ENCODE measurements at regions of chr7 and their contacts with region 1.

Region 1: DNA sequence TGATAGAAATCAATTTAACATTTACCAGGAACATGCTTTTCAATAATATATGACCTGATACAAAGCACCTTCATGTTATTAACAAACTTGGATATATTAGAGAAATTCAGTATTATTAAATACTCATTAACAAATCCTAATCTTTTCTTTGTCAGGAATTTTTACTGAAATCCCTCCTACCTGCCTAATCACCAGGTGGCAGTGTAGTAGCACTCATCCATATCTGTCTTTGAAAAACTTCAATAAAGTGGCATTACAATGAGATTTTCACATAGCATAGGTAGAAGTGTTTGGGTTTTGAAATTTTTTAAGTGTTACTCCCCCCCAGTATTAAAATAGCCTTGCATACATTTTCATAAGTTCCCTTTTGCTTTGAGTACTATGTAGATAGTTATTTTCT is 1246.6 kb upstream of the LRRN3 start:
- DNase-seq: peak; percentile 42
- ATAC-seq: peak; percentile 55; the same call in 1 of the 2 replicates
- H3K4me3 ChIP-seq: no peak overlapping the region
- H3K27ac ChIP-seq: no peak overlapping the region
- H3K4me1 ChIP-seq: no peaks in the 10 kb centered on the region
- H3K27me3 ChIP-seq: no peaks in the 10 kb centered on the region
- CTCF ChIP-seq: peak; percentile 74

Region 2: DNA sequence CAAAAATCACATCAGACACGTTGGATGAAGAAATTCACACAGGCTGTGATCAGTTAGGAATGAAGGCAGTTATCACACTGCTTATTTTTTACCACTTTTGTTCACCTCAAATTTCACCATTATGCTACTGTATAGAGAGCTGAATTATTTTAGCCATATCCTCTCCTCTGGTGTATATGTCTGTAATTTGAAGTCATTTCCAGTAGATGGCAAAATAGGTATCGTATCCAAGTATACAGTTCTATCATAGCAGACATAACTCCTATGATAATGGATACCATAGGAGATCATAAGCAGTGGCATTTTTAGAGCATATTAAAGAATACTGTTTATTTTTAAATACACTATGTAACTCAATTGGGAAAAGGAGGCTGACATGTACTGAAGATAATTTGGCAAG is 365.0 kb before region 1 on chr7:
- CTCF ChIA-PET with region 1: no interaction called
- POLR2A ChIA-PET with region 1: no interaction called
- intact Hi-C with region 1: loop called (anchors 2 kb)
- DNase-seq: peak; percentile 11
- ATAC-seq: peak; percentile 86
- H3K4me3 ChIP-seq: no peak overlapping the region
- H3K27ac ChIP-seq: no peak overlapping the region
- H3K4me1 ChIP-seq: no peaks in the 10 kb centered on the region
- H3K27me3 ChIP-seq: no peaks in the 10 kb centered on the region
- CTCF ChIP-seq: peak; percentile 29; the same call in 1 of the 2 replicates

Region 3: DNA sequence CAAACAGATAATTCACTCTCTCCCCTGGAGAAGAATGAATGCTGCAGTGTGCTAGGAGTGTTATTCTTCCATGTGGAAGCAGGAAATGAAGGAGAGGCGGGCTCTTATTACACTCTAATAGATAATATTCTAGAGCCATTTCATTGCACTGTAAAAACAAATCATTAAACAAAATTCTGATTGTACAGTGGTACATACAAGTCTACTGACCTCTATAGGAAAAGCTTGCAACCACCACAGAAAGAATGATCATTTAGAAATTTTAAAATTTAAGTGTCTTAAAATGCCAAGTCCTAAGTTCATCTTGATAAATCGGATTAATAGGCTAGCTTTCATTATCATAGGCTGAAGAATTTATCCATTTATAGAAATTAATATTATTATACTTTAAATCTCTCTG is 286.3 kb after region 1 on chr7:
- CTCF ChIA-PET with region 1: no interaction called
- POLR2A ChIA-PET with region 1: no interaction called
- intact Hi-C with region 1: loop called (anchors 1 kb)
- DNase-seq: peak; percentile 20
- ATAC-seq: peak; percentile 64
- H3K4me3 ChIP-seq: no peak overlapping the region
- H3K27ac ChIP-seq: no peak overlapping the region
- H3K4me1 ChIP-seq: no peaks in the 10 kb centered on the region
- H3K27me3 ChIP-seq: no peaks in the 10 kb centered on the region
- CTCF ChIP-seq: peak; percentile 47

Region 4: DNA sequence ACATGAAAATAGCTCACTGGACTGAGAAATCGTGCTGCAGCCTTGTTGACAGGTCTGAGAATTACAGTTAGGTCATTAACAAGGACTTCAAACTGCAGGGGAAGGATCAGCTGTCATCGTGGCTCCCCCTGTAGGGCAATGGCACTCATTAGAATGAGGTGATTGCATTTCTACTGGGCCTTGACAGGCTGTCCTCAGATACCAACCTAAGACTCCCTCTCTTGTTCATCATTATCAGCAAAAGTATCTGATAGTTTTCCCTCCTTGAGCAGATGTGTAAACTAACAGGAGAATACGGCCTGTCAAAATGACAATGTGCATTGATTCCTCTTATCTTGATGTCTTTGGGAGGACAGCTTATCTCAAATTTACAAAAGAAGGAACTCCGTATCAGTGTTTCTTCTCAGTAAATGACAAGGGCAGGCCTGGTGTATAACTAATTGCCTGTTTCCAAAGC is 598.0 kb after region 1 on chr7:
- CTCF ChIA-PET with region 1: no interaction called
- POLR2A ChIA-PET with region 1: no interaction called
- intact Hi-C with region 1: loop called (anchors 1 kb)
- DNase-seq: peak; percentile 61
- ATAC-seq: peak; percentile 99
- H3K4me3 ChIP-seq: no peak overlapping the region
- H3K27ac ChIP-seq: no peak overlapping the region
- H3K4me1 ChIP-seq: no peaks in the 10 kb centered on the region
- H3K27me3 ChIP-seq: no peaks in the 10 kb centered on the region
- CTCF ChIP-seq: peak; percentile 77

Region 5: DNA sequence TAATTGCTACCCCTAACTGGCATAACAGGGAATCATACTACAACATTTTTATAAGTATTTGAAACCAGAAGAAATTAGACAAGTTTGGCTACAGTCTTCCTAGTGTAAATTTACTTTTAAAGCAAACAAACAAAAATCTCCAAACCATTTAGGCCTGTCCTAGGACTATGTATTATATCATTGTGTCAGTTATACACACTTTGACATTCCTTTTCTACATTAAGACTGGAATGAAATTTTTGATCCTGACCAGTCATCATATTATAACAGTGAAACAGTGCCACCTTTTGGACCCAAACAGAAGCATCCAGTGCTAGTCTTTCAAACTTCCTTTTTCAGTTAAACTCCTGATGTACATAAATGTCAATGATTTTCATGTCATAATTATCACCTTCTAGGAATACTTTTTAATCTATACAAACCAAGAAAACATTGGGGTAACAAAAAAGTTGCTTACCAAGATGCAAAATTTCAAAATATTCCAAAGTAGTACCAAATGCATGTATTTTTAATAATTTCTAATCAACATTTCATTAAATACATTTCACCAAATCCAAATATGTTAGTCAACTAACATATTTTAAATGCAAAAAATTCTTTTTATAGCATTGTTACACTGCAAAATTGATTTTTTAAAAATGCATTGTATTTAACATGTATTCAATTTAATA is 1642.2 kb after region 1 on chr7:
- CTCF ChIA-PET with region 1: no interaction called
- POLR2A ChIA-PET with region 1: no interaction called
- intact Hi-C with region 1: loop called (anchors 2 kb)
- DNase-seq: peak; percentile 74
- ATAC-seq: peak; percentile 75
- H3K4me3 ChIP-seq: no peak overlapping the region
- H3K27ac ChIP-seq: peak overlapping the region; percentile 87
- H3K4me1 ChIP-seq: peaks cover 24% of the 10 kb centered on the region
- H3K27me3 ChIP-seq: no peaks in the 10 kb centered on the region
- CTCF ChIP-seq: peak; percentile 82